HEK293 (cell line): ENCODE measurements at regions of chr21 and their contacts with region 1.

Region 1: DNA sequence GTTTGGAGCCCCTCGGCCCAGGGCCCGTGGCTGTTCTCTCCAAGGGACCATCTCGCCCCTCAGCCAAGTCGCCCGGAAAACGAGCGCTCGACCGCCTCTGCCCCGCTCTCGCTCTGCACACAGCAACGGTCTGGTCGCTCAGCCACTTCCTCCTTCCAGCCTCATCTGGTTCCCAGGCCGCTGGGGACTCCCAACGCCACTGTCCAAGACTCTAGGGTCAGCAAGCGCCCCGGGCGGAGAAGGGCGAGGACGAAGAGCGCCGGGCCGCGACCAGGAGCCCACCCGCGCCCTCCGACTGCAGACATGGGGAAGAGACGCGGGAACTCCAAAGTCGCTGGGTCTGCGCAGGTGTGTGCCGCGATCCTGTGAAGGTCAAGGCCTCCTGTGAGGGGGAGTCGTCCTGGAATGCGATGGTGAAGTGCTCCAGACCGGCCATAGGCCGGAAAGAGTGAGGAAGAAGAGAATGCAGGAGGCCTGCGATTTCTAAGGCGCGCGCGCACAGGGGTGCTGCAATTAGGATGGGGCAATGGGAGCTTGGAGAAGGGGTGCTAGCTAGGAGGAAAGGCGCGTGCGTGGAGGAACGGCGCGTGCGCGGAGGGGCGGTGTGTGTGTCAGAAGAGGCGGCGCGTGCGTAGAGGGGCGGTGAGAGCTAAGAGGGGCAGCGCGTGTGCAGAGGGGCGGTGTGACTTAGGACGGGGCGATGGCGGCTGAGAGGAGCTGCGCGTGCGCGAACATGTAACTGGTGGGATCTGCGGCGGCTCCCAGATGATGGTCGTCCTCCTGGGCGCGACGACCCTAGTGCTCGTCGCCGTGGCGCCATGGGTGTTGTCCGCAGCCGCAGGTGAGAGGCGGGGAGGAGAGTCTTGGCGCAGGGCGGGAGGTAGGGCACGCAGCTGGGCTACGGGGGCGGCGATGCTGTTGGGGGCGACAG is at the start of gene IFNAR1:
- H3K4me3 ChIP-seq: peak within 1 kb of the TSS; percentile 88
- H3K27ac ChIP-seq: peak within 1 kb of the TSS; percentile 85
- H3K4me1 ChIP-seq: no peaks in the 10 kb centered on the region
- CTCF ChIP-seq: peak; percentile 71

Region 2: DNA sequence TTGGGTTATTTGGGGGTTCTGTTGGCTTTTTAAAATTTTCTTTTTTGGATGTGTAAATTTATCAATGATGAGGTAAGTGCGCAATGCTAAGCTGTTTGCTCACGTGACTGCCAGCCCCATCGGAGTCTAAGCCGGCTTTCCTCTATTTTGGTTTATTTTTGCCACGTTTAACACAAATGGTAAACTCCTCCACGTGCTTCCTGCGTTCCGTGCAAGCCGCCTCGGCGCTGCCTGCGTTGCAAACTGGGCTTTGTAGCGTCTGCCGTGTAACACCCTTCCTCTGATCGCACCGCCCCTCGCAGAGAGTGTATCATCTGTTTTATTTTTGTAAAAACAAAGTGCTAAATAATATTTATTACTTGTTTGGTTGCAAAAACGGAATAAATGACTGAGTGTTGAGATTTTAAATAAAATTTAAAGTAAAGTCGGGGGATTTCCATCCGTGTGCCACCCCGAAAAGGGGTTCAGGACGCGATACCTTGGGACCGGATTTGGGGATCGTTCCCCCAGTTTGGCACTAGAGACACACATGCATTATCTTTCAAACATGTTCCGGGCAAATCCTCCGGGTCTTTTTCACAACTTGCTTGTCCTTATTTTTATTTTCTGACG is 295.7 kb before region 1 on chr21:
- CTCF ChIA-PET with region 1: no interaction called
- POLR2A ChIA-PET with region 1: no interaction called
- H3K4me3 ChIP-seq: no peak overlapping the region
- H3K27ac ChIP-seq: no peak overlapping the region
- H3K4me1 ChIP-seq: no peaks in the 10 kb centered on the region
- CTCF ChIP-seq: no peak

Region 3: GRCh38 chr21:33157303-33157702 is 167.3 kb before region 1 on chr21:
- CTCF ChIA-PET with region 1: no interaction called
- POLR2A ChIA-PET with region 1: no interaction called
- H3K4me3 ChIP-seq: no peak overlapping the region
- H3K27ac ChIP-seq: no peak overlapping the region
- H3K4me1 ChIP-seq: no peaks in the 10 kb centered on the region
- CTCF ChIP-seq: no peak

Region 4: GRCh38 chr21:33238565-33239255 is 85.8 kb before region 1 on chr21:
- CTCF ChIA-PET with region 1: no interaction called
- POLR2A ChIA-PET with region 1: no interaction called
- H3K4me3 ChIP-seq: no peak overlapping the region
- H3K27ac ChIP-seq: no peak overlapping the region
- H3K4me1 ChIP-seq: no peaks in the 10 kb centered on the region
- CTCF ChIP-seq: no peak

Region 5: DNA sequence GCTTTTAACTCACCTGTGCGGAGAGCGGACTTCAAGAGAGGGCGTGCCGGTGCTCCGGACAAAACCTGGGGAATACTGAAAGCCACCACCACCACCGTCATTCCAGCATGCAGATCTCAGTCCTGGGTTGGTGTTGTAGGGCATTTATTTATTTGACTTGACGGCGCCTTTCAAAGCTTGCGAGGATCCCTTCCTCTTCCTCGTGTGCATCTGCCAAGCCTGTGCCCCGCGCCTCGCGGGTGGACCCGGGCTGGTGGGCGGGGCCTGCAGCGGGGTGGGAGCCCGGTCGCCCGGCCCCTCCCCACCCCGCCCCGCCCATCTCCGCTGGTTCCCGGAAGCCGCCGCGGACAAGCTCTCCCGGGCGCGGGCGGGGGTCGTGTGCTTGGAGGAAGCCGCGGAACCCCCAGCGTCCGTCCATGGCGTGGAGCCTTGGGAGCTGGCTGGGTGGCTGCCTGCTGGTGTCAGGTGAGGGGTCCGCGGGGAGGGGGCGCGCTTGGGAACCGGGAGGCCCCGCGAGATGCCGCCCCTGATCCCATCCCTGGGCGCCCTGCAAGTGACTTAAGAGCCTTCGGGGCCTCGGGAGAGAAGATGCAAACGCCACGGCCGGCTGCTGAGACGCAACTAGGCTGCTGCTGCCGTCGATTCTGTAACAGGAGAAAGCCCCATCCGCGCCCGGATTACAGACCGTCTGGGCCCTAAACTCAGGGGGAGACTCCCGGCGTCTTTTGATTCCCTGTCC is 58.3 kb before region 1 on chr21 and contains the start of gene IL10RB:
- CTCF ChIA-PET with region 1: no interaction called
- POLR2A ChIA-PET with region 1: interaction called, 11 read pairs
- H3K4me3 ChIP-seq: peak within 1 kb of the TSS; percentile 75
- H3K27ac ChIP-seq: peak within 1 kb of the TSS; percentile 25; the same call in 1 of the 2 replicates
- H3K4me1 ChIP-seq: no peaks in the 10 kb centered on the region
- CTCF ChIP-seq: peak; percentile 72

Region 6: DNA sequence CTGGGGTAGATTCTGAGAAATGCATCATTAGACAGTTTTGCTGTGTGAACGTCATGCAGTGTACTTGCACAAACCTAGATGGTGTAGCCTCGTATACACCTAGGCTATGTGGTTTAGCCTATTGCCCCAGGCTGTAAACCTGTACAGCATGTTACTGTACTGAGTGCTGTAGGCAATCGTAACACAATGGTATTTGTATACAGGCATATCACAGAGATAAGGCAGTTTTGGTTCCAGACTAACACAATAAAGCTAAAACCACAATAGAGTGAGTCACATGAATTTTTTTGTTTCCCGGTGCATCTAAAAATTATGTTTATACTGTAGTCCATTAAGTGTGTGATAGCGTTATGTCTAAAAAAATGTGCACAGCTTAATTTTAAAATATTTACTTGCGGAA is 51.5 kb before region 1 on chr21:
- CTCF ChIA-PET with region 1: no interaction called
- POLR2A ChIA-PET with region 1: interaction called, 11 read pairs
- H3K4me3 ChIP-seq: no peak overlapping the region
- H3K27ac ChIP-seq: no peak overlapping the region
- H3K4me1 ChIP-seq: peaks cover 3% of the 10 kb centered on the region
- CTCF ChIP-seq: no peak

Region 7: DNA sequence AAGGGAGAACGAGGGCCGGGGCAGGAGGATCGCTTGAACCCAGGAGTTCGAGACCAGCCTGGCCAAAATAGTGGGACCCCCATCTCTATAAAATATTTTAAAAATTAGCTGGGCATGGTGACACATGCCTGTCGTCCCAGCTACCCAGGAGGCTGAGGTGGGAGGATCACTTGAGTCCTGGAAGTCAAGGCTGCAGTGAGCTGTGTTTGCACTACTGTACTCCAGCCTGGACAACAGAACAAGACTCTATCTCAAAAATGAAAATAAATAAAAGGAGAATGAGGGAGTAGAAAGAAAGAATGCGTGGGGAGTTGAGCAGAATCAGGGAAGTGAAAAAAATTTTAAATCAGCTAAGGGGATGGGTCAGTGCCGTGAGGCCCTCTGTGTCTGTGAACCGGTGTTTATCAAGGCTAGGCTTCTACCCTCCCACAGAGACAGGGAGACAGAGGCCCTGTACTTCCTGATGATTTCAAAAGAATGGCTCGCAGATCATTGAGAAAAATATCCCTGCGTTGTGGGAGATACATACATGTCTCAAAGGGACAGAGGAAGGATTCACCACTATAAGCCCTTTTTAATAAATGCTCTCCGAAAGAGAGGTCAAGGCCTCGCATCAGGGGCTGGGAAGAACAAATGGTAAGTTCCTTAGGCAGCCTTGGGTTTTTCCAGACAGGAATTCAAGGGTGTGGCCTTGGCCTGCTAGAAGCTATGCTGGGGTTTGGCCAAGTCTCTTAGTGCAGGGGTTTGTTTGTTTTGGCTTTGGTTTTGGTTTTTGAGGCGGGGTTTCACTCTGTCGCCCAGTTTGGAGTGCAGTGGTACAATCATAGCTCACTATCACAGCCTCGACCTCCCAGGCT is 37.7 kb before region 1 on chr21:
- CTCF ChIA-PET with region 1: interaction called, 4 read pairs
- POLR2A ChIA-PET with region 1: interaction called, 13 read pairs
- H3K4me3 ChIP-seq: no peak overlapping the region
- H3K27ac ChIP-seq: no peak overlapping the region
- H3K4me1 ChIP-seq: peaks cover 11% of the 10 kb centered on the region
- CTCF ChIP-seq: no peak

Region 8: DNA sequence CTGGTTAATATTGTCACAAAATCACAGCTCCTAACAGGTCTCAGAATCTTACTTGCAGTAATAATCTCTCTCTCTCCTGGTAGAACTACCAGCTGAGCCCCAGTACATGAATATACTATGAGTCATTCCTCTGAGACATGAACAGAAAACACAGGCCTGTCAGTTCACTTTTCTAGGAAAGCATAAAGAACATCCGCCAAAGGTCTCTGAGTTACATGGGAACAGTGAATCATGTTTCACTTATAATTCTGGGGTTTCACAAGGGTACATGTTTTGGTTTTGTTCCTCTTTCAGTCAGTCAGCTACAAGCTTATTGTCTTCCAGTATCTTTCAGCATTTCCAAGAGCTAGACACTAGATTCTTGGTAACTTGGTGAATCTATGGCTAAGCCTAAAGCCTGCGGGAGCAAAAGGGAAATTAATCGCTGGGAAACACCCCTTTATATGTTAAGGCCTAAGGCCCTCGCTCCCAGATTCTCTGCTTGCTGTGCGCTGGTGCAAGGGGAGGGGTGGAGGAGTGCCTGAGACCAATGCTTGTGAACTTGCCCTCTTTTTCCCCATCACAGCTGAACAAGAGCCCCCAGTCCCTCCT is 110.3 kb after region 1 on chr21:
- CTCF ChIA-PET with region 1: no interaction called
- POLR2A ChIA-PET with region 1: interaction called, 10 read pairs
- H3K4me3 ChIP-seq: no peak overlapping the region
- H3K27ac ChIP-seq: no peak overlapping the region
- H3K4me1 ChIP-seq: no peaks in the 10 kb centered on the region
- CTCF ChIP-seq: no peak

Region 9: DNA sequence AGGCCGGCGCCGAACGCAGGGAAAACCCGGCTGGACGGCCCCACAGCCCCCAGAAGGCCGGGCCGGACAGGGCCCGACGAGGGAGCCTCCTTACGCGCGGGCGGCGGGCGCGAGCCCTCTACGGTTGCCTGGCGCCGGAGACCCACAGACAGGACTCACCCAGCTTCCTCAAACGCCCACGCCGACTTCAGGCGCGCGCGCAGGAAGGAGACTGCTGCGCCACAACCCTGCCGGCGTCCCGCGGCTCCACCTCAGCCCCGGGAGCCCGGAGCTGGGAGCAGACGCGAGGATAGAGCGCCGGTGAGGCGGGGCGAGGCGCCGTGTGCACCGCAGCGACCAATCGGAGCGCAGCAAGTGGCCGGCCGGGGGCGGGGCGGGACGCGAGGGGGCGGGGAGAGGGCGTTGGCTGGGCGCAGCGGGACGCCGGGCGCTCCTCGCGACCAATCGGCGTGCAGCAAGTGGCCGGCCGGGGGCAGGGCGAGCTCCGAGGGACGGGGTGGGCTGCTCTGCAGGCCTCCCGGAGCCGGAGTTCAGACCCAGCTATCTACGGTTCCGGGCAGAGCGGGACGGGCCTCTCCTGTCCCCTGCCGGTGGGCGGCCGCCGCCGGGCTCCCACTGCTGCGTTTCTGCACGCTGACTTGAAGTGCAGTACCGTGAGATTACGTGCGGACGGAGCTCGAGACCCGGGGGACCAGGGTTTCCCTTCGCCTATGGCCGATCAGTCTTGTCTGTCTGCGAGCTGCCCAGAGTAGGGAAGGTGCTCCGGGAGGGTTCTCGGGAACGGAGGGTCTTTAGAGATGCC is 155.3 kb after region 1 on chr21 and contains the start of gene TMEM50B:
- CTCF ChIA-PET with region 1: no interaction called
- POLR2A ChIA-PET with region 1: interaction called, 11 read pairs
- H3K4me3 ChIP-seq: peak within 1 kb of the TSS; percentile 59
- H3K27ac ChIP-seq: peak within 1 kb of the TSS; percentile 87
- H3K4me1 ChIP-seq: peaks cover 2% of the 10 kb centered on the region; the same call in 1 of the 2 replicates
- CTCF ChIP-seq: peak; percentile 98